Right ventricle myocardium inferior (tissue), 1 donor: ENCODE measurements at regions of chrX and their contacts with region 1.

Region 1: GRCh38 chrX:71068049-71068763 is at the start of gene SNX12:
- DNase-seq: peak; percentile 92
- ATAC-seq: peak; percentile 100
- total RNA-seq, gene SNX12: 49.5 TPM

Region 2: DNA sequence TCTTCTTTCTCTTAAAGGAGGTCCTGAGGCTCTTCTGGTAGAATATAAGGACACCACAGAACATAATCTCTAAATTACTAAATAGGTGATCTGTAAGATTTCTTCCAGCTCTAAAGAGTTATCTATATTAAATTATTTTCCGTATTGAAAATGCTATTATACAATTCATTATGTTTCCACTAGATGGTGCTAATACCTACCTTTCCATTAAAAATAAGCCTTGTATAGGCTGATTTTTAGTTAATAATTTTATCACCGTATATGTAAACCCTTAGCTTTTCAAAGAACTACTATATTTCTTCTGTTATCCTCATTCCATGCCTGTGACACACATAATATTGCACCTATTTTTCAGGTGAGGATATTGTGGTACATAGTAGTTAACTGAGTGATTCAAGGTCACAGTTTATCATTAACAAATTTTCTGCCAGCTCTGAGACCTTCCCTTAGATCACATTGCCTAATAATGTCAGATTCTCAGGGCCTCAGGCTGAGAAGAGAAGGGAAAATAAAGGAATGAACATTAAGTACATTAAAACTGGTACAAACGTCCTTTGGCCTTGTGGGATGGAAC is 298.5 kb before region 1 on chrX:
- intact Hi-C with region 1: no loop called
- DNase-seq: no peak
- ATAC-seq: no peak

Region 3: DNA sequence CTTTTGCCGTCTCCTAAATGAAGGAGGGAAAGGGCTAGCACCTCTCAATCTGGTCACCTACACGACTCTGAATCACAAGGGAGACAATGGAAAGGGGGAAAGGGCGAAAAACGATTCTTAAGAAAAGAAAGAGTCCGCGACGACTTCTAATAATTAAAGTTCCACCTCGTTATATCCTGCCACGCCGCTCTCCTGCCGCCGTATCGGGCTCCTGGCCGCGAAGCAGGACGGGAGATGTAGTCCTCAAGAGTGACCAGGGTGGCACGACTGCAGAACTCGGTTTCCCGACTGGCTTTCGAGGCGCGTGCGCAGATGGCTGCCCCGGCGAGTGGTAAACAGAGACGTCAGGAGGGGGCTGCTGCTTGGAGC is 27.3 kb after region 1 on chrX and contains the start of gene FOXO4:
- intact Hi-C with region 1: loop called (anchors 2 kb)
- DNase-seq: peak; percentile 95
- ATAC-seq: peak; percentile 96
- total RNA-seq, gene FOXO4: 52.7 TPM

Region 4: DNA sequence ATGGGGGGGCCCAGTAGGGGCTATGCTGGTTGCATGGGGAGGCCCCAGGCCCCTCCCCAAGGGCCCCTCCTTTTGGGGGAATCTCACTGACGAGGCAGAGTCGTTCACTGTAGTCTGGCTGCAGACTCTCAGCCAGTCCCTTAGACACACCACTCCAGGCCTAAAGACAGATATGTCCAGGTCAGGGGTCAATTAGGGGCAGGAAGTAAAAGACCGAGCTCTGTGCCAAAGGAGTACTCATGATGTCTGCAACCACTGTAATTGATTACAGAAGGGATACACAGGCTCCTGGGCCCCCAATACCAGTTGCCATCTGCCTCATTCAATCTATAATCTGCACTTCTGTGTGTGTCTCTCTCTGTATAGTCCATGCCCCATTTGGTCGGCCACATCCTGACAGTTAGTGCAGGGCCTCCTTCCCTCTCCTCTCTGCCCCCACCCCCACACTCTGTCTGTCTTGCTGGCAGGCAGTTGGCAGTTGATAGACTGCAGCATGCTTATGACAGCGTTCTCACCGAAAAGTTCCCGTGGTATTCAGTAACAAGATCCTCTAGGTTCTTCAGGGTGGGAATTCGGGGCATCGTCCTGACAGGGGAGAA is 39.7 kb after region 1 on chrX:
- intact Hi-C with region 1: no loop called
- DNase-seq: no peak
- ATAC-seq: no peak